ENCODE measurements at regions of chr1 and their contacts with region 1.

Region 1: DNA sequence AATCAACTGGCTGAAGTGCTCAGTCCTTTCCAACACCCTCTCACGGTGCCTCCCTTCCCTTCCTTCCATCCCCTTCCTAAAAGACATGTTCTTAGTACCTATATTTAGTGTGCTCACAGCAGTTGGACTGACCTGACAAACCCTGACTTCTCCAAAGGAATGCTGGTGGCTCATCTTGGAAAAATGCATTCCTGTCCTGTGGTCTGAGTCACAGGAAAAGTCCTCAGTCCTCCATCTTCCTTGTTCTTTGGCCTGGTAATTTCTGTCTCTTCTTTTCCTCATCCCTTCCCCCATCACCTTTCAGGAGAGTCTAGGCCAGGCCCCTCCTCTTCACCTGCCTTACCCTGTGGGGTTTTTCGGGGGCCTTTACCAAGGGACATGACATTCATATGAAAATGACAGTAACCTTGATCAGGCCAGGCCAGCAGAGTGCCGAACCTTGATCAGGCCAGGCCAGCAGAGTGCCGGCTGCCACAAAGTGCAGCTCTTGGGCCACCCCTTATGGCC is 7.2 kb downstream of the ATP1B1 start:
- DNase-seq: peak; percentile 71 to 95
- H3K4me3 ChIP-seq: peak overlapping the region; percentile 20; the same call in 1 of the 2 replicates
- H3K27ac ChIP-seq: peak overlapping the region; percentile 83
- H3K4me1 ChIP-seq: peaks cover 72% of the 10 kb centered on the region
- H3K27me3 ChIP-seq: no peaks in the 10 kb centered on the region
- CTCF ChIP-seq: no peak

Region 2: DNA sequence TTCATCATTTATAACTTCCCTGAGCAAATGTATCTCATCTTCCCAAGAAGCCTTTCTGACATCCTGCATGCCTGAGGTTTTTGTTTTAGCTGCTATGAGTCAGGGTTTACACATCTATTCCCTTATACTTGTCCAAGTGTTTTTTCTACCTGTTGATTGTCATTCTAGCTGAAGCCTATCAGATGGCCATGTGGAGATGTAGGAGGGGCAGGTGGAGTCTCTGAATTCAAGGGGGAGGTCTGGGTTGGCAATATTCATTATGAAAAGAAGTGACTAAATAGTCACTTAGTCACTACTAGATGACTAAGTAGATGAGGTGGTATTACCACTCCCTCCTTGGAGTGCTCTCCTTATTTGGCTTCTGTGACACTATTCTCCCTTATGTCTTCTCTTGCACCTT is 484.9 kb before region 1 on chr1:
- CTCF ChIA-PET with region 1: no interaction called
- POLR2A ChIA-PET with region 1: no interaction called
- intact Hi-C with region 1: loop called (anchors 2 kb)
- DNase-seq: peak; percentile 62 to 97
- H3K4me3 ChIP-seq: no peak overlapping the region
- H3K27ac ChIP-seq: peak overlapping the region; percentile 62
- H3K4me1 ChIP-seq: peaks cover 14% of the 10 kb centered on the region
- H3K27me3 ChIP-seq: no peaks in the 10 kb centered on the region
- CTCF ChIP-seq: no peak

Region 3: DNA sequence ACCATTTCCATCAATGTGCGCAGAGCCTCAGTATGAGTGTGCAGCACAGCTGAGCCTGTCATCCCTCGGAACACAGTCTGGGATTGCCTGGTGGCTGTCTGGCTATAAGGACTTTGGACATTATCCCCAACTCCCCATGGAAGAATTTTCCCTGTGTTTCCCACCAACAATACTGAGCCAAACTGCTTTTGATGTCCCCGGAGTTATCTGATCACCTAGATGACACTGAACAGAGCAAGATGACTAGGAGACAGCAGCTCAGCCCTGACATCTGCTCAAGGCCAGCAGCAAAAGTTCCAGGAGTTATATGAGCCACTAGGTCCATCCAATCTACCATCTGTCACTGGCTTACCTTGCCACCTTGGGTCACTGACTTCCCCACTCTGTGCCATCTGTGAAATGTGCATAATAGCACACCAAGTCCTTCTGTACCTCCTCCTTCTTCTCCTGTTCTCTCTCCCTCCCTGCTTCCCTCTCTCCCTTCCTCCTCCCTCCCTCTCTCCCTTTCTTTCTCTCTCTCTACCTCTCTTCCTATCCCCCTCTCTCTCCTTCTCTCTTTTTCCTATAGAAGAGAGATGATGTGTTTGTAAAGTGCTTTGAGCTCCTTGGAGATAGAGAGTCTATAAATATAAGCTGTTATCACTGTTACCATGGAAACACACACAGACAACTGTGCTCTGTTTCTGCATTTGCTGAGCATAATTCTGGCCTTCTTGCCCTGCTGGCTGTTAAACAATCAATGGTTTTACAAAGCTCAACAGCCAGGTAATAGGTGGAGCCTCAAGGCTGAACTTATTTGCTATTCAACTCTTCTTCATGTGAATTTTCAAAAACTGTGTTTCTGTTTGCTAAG is 26.8 kb before region 1 on chr1:
- CTCF ChIA-PET with region 1: no interaction called
- POLR2A ChIA-PET with region 1: no interaction called
- intact Hi-C with region 1: no loop called
- DNase-seq: peak in 1 of 2 experiments; percentile 45
- H3K4me3 ChIP-seq: no peak overlapping the region
- H3K27ac ChIP-seq: no peak overlapping the region
- H3K4me1 ChIP-seq: 0 out of 2 replicates have a peak, but pooled peaks cover 8% of the 10 kb centered on the region
- H3K27me3 ChIP-seq: no peaks in the 10 kb centered on the region
- CTCF ChIP-seq: no peak

Measured in PC-9 (cell line).